Thyroid gland (tissue), 4 donors: ENCODE measurements at regions of chr2 and their contacts with region 1.

Region 1: DNA sequence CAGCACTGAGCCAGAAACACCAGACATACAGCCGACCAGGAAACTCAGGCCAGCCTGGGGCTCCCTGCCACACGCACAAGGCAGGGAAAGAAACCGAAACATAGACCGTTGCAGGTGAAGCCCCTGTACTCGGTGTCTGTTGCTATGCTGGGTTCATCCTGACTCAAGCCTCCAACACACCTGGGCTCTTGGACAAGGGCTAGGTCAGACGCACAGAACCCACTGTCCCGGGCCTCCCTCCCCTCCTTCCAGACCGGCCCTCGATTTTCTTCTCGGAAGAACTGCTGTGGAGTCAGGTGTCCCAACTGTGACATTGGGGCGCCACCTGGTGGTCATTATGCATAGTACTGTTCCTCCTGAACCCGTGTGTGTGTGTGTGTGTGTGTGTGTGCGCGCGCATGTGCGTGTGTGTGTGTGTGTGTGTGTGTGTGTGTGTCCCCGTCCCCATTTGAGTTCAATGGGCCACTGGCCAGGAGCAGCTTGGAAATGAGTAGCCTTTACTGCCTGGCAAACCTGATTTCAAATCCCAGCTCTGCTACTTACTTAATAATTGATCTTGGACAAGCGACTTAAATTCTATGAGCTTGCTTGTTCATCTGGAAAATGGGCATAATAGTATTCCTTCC is 55.4 kb upstream of the GLI2 start:
- DNase-seq: peak; percentile 87 to 91
- H3K4me3 ChIP-seq: no peak overlapping the region
- H3K27ac ChIP-seq: no peak overlapping the region
- H3K4me1 ChIP-seq: peaks cover 16 to 40% of the 10 kb centered on the region in 2 donors
- H3K27me3 ChIP-seq: no peaks in the 10 kb centered on the region
- CTCF ChIP-seq: peak in 5 of 6 experiments; percentile 42 to 91 (median 81)
- POLR2A ChIP-seq: no peak

Region 2: DNA sequence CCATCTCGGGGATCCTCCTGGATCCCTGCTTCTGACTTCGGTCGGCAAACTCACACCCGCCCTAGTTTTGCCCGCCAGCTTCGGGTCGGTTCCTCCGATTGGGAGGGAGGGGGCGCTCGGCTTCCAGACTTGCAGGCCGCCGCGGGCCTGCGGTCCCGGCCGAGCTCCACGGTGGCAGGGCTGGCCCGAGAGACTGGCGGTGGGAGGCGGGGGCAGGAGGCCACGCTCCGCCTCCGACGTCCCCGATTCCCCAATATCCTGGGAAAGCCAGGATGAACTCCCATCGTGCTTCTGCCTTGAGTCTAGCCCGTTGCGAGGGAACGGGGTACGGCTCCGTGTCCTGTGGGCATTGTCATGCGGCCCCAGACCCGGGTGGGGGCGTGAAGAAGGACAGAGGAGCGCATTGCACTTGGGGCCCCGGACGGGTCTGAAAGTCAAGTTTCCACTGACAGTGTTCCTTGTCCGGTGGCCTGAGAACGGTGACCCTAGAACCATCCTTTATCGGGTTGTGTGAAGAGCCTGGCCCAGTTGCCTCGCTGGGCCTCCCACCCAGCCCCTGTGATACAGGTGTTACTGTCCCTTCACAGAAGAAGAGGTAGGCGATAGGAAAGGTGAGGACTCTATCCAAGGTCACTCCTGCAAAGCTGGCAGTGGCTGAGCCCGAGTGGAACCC is 336.7 kb before region 1 on chr2:
- intact Hi-C with region 1: loop called (anchors 2 kb)
- DNase-seq: peak; percentile 89 to 93
- H3K4me3 ChIP-seq: peak overlapping the region in 1 of 3 donors; percentile 40
- H3K27ac ChIP-seq: peak overlapping the region in 2 of 3 donors; percentile 32 to 84
- H3K4me1 ChIP-seq: peaks cover 28 to 30% of the 10 kb centered on the region in 2 donors
- H3K27me3 ChIP-seq: no peaks in the 10 kb centered on the region
- CTCF ChIP-seq: peak; percentile 72 to 98 (median 88)
- POLR2A ChIP-seq: peak in 1 of 2 donors; percentile 45

Region 3: GRCh38 chr2:120520929-120521912 is 159.0 kb before region 1 on chr2:
- intact Hi-C with region 1: loop called (anchors 10 kb)
- DNase-seq: peak; percentile 52 to 66
- H3K4me3 ChIP-seq: no peak overlapping the region
- H3K27ac ChIP-seq: no peak overlapping the region
- H3K4me1 ChIP-seq: peaks cover 0 to 6% of the 10 kb centered on the region in 2 donors
- H3K27me3 ChIP-seq: no peaks in the 10 kb centered on the region
- CTCF ChIP-seq: peak; percentile 65 to 89 (median 79)
- POLR2A ChIP-seq: no peak